Posterior cingulate gyrus (tissue), 11 donors: ENCODE measurements at regions of chr11 and their contacts with region 1.

Region 1: GRCh38 chr11:14907411-14908213 is 15.6 kb upstream of the CYP2R1 start:
- DNase-seq: peak; percentile 52 to 96 (median 82)

Region 2: GRCh38 chr11:13354335-13354734 is 1553.3 kb before region 1 on chr11:
- intact Hi-C with region 1: no loop called
- DNase-seq: no peak

Region 3: DNA sequence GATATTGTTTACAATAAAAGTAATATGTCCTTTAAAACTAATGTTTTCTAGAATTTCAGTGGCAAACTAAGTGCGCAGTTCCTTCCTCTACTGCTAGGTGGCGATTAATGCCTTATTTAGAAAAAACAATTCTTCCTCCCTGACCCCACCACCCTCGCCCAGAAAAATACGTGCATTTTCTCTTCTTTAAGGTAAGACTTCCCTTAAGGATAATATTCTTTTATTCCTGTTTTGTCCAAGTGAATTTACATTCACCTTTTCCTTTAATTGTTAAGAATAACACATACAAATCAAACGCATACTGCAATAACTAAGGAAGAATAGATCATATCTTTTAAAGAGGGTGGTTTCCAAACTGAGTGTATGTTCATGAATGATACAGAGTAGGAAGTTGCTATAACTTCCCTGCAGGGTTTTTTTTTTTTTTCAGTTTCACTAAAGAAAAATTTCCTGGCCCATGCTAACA is 370.4 kb before region 1 on chr11:
- intact Hi-C with region 1: loop called (anchors 2 kb)
- DNase-seq: no peak

Region 4: DNA sequence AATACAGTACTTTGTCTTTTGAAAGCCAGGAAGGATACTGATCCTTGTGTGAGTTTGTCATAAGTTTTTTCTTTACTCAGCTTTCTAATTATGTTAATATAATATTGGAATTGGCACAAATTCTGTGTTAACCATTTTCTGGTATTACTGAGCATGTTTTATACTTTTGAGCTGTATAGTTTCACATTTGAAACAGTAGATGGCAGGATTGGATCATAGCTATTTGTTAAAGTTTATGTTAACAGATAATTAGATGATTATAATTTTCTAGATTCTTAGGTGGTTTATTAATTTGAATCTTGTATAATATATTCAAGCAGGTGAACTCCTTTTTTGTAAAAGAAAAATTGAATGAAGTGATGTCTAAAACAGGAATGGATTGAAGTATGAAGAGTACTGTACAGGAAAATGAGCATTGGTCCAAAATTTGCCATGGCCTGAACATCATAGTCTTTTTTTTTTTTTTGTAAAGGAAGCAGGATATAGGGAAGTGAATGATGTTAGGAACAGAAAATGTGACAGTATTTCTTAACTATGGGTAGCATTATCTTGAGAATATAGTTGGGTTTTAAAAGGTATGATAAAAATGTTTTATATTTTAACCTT is 117.6 kb before region 1 on chr11:
- intact Hi-C with region 1: loop called (anchors 1 kb)
- DNase-seq: no peak

Region 5: DNA sequence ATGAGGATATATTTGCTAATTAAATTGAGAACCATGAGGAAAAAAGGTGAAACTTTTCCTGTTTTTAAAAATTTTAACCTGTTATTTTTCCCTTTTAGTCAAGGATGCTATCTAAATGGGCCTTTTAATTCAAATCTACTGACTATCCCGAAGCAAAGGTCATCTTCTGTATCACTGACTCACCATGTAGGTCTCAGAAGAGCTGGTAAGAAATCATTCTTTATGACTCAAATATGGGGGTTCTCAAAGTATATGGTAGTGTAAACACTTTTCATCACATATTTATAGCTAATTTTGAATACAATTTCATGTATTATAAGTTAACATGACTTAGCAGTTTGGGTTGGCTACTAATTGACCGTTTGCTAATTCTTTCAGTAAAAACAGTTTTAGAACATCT is 103.8 kb before region 1 on chr11:
- intact Hi-C with region 1: no loop called
- DNase-seq: no peak

Region 6: GRCh38 chr11:15074206-15075161 is 166.9 kb after region 1 on chr11:
- intact Hi-C with region 1: loop called (anchors 1 kb)
- DNase-seq: peak; percentile 54 to 96 (median 80)

Region 7: DNA sequence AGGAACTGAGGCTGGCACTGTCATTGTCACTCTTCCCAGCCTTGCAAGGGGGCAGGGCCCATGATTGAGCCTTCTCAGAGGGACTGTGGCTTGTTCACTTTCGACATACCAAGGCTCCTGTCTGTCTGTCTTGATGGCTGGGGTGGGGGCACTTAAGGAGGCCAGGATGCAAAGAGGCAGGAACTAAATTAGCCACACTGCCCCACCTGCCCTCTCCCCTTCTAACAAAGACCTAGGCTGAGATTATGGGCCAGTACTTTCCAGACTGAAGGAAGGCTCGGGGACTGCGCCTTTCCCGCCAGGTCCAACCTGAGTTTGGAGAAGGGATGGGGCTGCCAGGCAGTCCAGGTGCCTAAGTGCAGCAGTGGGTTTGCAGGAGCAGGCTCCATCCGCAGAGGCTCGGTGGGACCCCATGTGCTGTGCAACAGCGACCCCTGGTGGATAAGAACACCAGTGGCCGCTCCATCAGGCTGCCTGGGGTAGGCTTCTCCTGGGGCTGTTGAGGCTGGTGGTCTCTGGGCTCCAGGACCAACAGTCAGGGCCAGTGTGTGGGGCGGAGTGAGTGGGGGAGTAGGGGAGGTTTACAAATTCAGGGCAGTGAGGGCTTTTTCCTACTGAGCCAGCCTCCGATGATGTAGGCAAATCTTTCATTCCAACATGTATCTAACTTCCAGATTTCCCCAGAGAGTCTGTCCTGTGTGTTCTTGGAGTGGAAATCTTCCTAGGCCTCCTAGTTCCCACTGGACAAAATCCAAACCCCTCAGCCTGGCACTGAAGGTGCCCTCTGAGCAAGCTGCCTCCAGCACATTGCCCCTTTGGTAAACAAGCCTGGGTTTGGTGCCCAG is 301.0 kb after region 1 on chr11:
- intact Hi-C with region 1: loop called (anchors 1 kb)
- DNase-seq: peak; percentile 63 to 97 (median 85)